AG04449 (cell line): ENCODE measurements at regions of chr20 and their contacts with region 1.

Region 1: DNA sequence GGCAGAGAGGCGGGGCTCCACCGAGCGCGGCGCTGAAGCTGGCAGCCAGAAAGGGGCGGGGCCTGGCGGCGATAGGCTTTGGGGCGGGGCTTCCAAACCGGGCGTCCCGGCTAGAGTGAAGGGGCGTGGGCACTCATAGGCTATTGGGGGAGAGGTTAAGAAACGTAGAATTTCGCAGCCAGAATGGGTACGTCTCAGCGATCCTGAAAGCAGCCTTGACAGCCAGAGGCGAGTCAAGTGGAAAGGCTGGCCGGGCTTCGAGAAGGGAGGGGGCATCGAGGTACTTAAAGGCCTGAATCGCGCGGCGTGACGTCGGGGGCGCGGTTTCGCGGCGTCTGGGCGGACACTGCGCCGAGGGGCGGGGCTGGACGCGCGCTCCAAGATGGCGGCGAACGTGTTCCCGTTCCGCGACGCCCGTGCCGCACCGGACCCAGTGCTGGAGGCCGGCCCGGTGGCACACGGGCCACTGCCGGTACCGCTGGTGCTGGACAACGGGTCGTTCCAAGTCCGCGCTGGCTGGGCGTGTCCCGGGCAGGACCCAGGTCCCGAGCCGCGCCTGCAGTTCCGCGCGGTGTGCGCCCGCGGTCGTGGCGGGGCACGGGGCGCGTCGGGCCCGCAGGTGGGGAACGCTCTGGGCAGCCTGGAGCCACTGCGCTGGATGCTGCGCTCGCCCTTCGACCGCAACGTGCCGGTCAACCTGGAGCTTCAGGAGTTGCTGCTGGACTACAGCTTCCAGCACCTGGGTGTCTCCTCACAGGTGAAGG is at the start of gene ACTR5:
- DNase-seq: peak; percentile 28
- H3K4me3 ChIP-seq: peak within 1 kb of the TSS; percentile 94
- CTCF ChIP-seq: no peak

Region 2: GRCh38 chr20:38460040-38460623 is 288.1 kb before region 1 on chr20:
- CTCF ChIA-PET with region 1: no interaction called
- POLR2A ChIA-PET with region 1: no interaction called
- DNase-seq: peak; percentile 31
- H3K4me3 ChIP-seq: no peak overlapping the region
- CTCF ChIP-seq: no peak

Region 3: GRCh38 chr20:38633577-38634093 is 114.6 kb before region 1 on chr20:
- CTCF ChIA-PET with region 1: interaction called, 33 read pairs
- POLR2A ChIA-PET with region 1: no interaction called
- DNase-seq: no peak
- H3K4me3 ChIP-seq: no peak overlapping the region
- CTCF ChIP-seq: peak; percentile 88

Region 4: GRCh38 chr20:38645980-38646858 is 102.1 kb before region 1 on chr20:
- CTCF ChIA-PET with region 1: interaction called, 164 read pairs
- POLR2A ChIA-PET with region 1: no interaction called
- DNase-seq: no peak
- H3K4me3 ChIP-seq: peak overlapping the region; percentile 32; the same call in 1 of the 2 replicates
- CTCF ChIP-seq: peak; percentile 99

Region 5: GRCh38 chr20:38730989-38731737 is 17.1 kb before region 1 on chr20:
- CTCF ChIA-PET with region 1: interaction called, 14 read pairs
- POLR2A ChIA-PET with region 1: no interaction called
- DNase-seq: no peak
- H3K4me3 ChIP-seq: peak overlapping the region; percentile 32
- CTCF ChIP-seq: peak; percentile 97

Region 6: GRCh38 chr20:38759106-38759505 is 10.8 kb after region 1 on chr20:
- CTCF ChIA-PET with region 1: interaction called, 24 read pairs
- POLR2A ChIA-PET with region 1: no interaction called
- DNase-seq: no peak
- H3K4me3 ChIP-seq: no peak overlapping the region
- CTCF ChIP-seq: no peak

Region 7: DNA sequence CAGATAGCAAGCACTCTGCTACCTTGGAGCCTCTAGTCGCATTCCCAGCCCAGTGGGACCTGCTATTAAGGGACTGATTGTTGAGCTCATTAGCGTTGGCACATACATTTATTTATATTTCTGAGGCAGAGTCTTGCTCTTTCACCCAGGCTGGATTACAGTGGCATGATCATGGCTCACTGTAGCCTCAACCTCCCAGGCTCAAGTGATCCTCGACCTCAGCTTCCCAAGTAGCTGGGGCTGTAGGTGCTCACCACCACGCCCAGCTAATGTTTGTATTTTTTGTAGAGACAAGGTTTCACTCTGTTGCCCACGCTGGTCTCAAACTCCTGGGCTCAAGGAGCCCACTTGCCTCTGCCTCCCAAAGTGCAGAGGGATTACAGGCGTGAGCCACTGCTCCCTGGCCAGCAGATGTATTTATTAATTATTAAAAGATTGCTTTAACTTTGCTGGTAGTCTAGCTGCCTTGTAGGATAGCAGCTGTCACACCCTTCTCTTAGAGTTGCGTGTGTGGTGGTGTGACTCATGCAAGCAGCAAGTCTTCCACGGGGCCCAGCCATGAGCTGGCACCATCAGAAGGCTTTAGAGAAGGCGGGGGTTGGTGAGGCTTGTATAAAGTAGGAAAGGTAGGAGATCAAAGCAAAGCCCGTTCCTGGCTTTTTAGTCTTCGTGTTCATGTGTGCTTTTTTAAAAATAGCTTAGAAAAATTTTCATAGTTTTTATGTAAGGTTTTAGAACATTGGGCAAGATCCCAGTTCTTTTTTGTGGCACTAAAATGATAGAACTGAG is 16.5 kb after region 1 on chr20:
- CTCF ChIA-PET with region 1: interaction called, 24 read pairs
- POLR2A ChIA-PET with region 1: no interaction called
- DNase-seq: peak; percentile 68
- H3K4me3 ChIP-seq: no peak overlapping the region
- CTCF ChIP-seq: no peak